ENCODE measurements at regions of chr4 and their contacts with region 1.

Region 1: GRCh38 chr4:113979148-113979904 is at the start of gene ARSJ:
- DNase-seq: peak; percentile 11 to 85
- H3K4me3 ChIP-seq: peak within 1 kb of the TSS; percentile 74 to 80
- H3K27ac ChIP-seq: peak within 1 kb of the TSS; percentile 92 to 94
- H3K4me1 ChIP-seq: peaks cover 0 to 17% of the 10 kb centered on the region in 2 donors
- H3K27me3 ChIP-seq: no peaks in the 10 kb centered on the region
- CTCF ChIP-seq: no peak
- total RNA-seq, gene ARSJ: 14.6 TPM

Region 2: GRCh38 chr4:113684534-113685091 is 294.7 kb before region 1 on chr4:
- intact Hi-C with region 1: loop called (anchors 10 kb)
- DNase-seq: peak; percentile 17 to 85
- H3K4me3 ChIP-seq: no peak overlapping the region
- H3K27ac ChIP-seq: peak overlapping the region; percentile 38 to 90
- H3K4me1 ChIP-seq: peaks cover 16 to 19% of the 10 kb centered on the region in 2 donors
- H3K27me3 ChIP-seq: no peaks in the 10 kb centered on the region
- CTCF ChIP-seq: peak; percentile 45 to 60 (median 55)

Region 3: GRCh38 chr4:113958766-113959538 is 20.4 kb before region 1 on chr4:
- intact Hi-C with region 1: loop called (anchors 2 kb)
- DNase-seq: no peak
- H3K4me3 ChIP-seq: peak overlapping the region in 1 of 2 donors; percentile 46
- H3K27ac ChIP-seq: peak overlapping the region; percentile 63 to 77
- H3K4me1 ChIP-seq: peaks cover 0 to 18% of the 10 kb centered on the region in 2 donors
- H3K27me3 ChIP-seq: no peaks in the 10 kb centered on the region
- CTCF ChIP-seq: no peak

Region 4: DNA sequence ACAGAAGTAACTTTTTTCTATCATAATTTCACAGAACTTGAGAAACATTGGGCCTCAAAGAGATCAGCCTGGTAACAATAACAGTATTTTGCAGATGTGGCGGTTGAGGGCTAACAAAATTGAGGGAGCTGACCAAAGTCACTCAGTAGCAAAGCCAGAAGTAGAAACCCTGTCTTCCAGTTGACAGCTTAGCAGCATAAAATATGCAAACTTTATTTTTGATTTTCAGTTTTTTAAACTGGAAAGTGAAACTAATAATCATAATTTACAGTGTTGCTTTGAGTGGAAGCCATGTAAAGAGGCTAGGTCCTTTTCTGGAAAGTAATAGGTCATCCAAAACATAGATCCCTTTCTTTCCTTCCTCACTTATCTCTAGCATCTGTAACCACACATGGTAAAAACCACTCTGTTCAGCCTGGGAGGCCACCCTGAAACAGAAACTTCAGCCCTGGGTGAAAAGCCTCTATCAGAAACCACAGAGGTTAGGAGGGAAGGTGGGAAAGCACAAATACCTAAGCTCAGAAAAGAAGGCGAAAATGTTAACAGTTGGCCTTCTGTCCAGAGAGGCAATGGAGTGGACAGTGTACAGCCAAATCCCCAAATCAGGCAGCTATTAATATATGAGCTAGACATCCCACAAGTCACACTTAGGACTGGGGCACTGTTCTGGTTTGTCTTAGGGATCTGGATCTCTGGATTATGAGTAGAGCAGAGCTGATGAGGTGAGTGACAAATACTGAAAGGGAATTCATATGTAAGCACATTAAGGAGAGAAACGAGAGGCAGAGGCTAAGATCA is 61.2 kb after region 1 on chr4:
- intact Hi-C with region 1: no loop called
- DNase-seq: no peak
- H3K4me3 ChIP-seq: no peak overlapping the region
- H3K27ac ChIP-seq: no peak overlapping the region
- H3K4me1 ChIP-seq: no peaks in the 10 kb centered on the region
- H3K27me3 ChIP-seq: no peaks in the 10 kb centered on the region
- CTCF ChIP-seq: no peak

Region 5: GRCh38 chr4:114272226-114272625 is 292.9 kb after region 1 on chr4:
- intact Hi-C with region 1: loop called (anchors 5 kb)
- DNase-seq: no peak
- H3K4me3 ChIP-seq: no peak overlapping the region
- H3K27ac ChIP-seq: peak overlapping the region; percentile 22 to 65
- H3K4me1 ChIP-seq: peaks cover 0 to 7% of the 10 kb centered on the region in 2 donors
- H3K27me3 ChIP-seq: no peaks in the 10 kb centered on the region
- CTCF ChIP-seq: no peak

Measured in ascending aorta (tissue), 2 donors.